ENCODE measurements at regions of chr9 and their contacts with region 1.

Region 1: GRCh38 chr9:37732086-37732741 is 21.4 kb upstream of the TRMT10B start:
- DNase-seq: no peak

Region 2: DNA sequence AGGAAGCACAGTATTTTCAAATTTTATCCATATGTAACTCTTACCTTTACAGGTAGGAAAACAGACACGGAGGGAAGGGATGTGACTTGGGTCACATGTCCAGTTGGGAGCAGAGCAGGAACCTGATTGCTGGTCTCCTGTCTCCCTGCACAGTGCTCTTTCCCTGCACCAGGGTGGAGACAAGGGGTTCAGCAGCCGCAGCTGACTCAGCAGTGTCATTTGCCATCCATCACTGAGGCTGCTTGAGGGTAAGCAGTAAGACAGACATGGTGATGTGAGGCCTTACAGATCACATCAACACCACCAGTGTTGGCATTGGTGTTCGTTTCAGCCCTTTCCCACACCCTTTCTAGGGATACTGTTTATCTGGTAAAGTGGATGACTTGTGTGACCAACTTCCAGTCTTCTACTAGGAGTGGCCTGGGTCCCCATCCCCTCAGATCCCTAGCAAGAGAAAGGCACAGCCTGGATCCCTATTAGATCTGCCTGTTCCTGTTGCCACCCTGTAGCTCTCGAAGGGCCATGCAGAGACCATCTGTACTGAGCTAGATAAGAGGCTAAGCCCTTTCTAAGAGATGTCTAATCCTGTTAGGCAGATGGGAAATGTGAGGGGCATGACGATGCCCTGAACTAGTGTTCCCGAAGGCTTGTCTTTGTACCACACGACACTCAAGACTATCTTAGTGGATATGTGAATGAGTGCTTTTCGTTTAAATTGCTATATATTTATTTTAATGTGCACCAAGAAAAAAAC is 52.4 kb before region 1 on chr9:
- intact Hi-C with region 1: loop called in 1 of 2 experiments (anchors 5 kb)
- DNase-seq: no peak

Region 3: GRCh38 chr9:38117651-38118050 is 385.4 kb after region 1 on chr9:
- intact Hi-C with region 1: no loop called
- DNase-seq: peak; percentile 7

Measured in posterior vena cava (tissue), 2 donors.